CD4-positive, alpha-beta memory T cell (primary cell): ENCODE measurements at regions of chr3 and their contacts with region 1.

Region 1: DNA sequence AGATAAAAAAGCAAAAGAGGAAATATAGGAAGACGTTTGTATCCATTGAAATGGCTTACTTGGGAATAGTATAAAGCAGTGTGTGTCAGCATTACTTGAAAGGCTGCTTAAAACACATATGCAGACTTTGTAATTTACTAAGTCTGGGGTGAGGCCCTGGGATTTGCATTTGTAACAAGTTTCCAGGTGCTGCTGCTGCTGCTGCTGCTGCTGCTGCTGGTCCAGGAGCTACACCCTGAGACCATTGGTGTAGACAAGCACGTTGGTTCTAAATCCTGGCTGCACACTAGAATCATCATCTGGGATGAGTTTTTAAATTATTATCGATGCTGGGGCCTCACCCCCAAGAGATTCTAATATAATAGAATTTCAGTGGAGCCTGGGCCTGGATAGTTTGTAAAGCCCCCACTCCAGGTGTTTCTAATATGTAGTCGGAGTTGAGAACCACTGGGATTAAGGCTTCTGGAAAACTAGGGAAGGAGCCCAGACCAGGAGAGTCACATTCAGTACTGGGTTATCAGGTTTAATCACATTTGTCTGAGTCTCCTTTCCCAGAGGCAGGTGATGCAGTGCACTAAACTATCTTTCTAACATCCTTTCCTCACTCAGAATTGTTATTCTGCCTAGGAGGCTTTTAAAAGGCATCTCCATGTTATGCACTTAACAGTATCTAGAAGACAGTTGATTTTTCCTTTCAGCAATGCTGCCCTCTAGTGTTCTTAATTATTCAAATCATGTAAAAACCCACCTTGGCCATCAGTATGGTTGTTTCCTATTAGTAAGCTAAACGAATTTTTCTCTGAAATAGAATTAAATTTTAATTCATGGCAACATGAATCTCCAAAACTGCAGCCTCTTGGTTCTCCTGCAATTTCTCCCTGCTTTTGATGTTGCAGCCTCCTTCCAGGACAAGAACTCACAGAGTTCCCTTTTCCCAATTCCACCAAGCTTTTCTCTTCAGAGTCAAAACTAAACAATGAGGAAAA is 45.4 kb downstream of the SSR3 start:
- DNase-seq: peak in 4 of 5 donors; percentile 56 to 68 (median 62)
- H3K4me3 ChIP-seq: no peak overlapping the region
- H3K4me3 Mint-ChIP-seq: no peak overlapping the region
- H3K27ac ChIP-seq: no peak overlapping the region
- H3K27ac Mint-ChIP-seq: no peak overlapping the region
- H3K4me1 ChIP-seq: no peaks in the 10 kb centered on the region
- H3K4me1 Mint-ChIP-seq: peaks cover 0 to 17% (median 8%) of the 10 kb centered on the region in 4 donors
- H3K27me3 ChIP-seq: no peaks in the 10 kb centered on the region
- H3K27me3 Mint-ChIP-seq: peaks cover 2 to 3% of the 10 kb centered on the region in 2 donors

Region 2: DNA sequence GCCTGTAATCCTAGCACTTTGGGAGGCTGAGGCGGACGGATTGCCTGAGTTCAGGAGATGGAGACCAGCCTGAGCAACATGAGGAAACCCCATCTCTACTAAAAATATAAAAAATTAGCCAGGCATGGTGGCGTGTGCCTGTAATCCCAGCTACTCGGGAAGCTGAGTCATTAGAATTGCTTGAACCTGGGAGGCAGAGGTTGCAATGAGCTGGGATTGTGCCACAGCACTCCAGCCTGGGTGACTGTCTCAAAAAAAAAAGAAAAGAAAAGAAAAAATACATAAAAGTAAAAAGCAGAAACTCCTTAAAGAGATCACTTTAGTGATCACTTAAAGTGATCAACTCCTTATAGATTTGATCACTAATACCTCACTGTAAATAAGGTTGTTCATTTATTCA is 561.0 kb before region 1 on chr3:
- CTCF ChIA-PET with region 1: no interaction called
- POLR2A ChIA-PET with region 1: no interaction called
- intact Hi-C with region 1: no loop called
- DNase-seq: no peak
- H3K4me3 ChIP-seq: no peak overlapping the region
- H3K4me3 Mint-ChIP-seq: no peak overlapping the region
- H3K27ac ChIP-seq: no peak overlapping the region
- H3K27ac Mint-ChIP-seq: no peak overlapping the region
- H3K4me1 ChIP-seq: no peaks in the 10 kb centered on the region
- H3K4me1 Mint-ChIP-seq: peaks cover 0 to 3% (median 0%) of the 10 kb centered on the region in 4 donors
- H3K27me3 ChIP-seq: no peaks in the 10 kb centered on the region
- H3K27me3 Mint-ChIP-seq: no peaks in the 10 kb centered on the region

Region 3: GRCh38 chr3:156382458-156383346 is 126.8 kb before region 1 on chr3:
- CTCF ChIA-PET with region 1: interaction called, 9 read pairs
- POLR2A ChIA-PET with region 1: no interaction called
- intact Hi-C with region 1: loop called (anchors 5 kb)
- DNase-seq: no peak
- H3K4me3 ChIP-seq: no peak overlapping the region
- H3K4me3 Mint-ChIP-seq: no peak overlapping the region
- H3K27ac ChIP-seq: no peak overlapping the region
- H3K27ac Mint-ChIP-seq: no peak overlapping the region
- H3K4me1 ChIP-seq: no peaks in the 10 kb centered on the region
- H3K4me1 Mint-ChIP-seq: no peaks in the 10 kb centered on the region
- H3K27me3 ChIP-seq: no peaks in the 10 kb centered on the region
- H3K27me3 Mint-ChIP-seq: peaks cover 6 to 7% of the 10 kb centered on the region in 2 donors

Region 4: DNA sequence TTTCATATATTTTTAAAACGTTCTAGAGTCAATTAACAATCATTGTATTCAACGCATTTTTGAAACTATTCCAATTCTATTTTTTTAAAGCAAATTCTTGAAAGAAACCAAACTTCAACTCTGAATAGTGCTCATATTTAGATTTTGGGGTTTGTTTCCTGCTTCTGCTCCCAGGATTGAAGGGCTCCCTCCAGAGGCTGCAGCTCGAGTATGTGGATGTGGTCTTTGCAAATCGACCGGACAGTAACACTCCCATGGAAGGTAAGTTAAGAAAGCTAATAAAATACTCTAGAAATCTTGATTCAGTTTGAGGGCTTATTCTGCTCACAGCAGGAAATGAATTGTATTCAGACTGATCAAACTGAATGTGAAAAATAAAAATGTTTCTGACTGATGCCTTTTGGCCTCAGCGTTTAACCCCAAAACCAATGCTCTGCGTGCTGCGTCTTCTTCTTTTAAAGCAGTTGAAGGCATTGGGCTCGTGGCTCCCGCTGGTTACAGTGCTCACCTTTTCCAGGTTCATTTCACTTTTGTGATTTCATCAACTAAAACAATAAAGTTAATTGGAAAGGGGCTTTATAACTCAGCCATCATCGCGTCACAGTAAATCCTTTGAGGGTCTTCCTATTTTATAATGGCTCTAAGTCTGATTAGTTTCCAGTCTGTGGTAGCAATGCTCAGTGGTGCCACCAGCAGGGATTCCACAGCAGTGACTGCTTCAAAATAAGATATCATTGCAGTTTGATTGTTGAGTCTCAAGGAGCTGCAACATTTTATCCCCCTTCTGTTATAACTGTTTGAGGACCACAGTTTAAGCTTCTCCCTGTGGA is 34.7 kb before region 1 on chr3:
- CTCF ChIA-PET with region 1: interaction called, 155 read pairs
- POLR2A ChIA-PET with region 1: interaction called, 3 read pairs
- intact Hi-C with region 1: loop called (anchors 1 kb)
- DNase-seq: no peak
- H3K4me3 ChIP-seq: no peak overlapping the region
- H3K4me3 Mint-ChIP-seq: peak overlapping the region in 2 of 8 donors; percentile 31 to 36
- H3K27ac ChIP-seq: no peak overlapping the region
- H3K27ac Mint-ChIP-seq: no peak overlapping the region
- H3K4me1 ChIP-seq: no peaks in the 10 kb centered on the region
- H3K4me1 Mint-ChIP-seq: peaks cover 0 to 1% (median 0%) of the 10 kb centered on the region in 4 donors
- H3K27me3 ChIP-seq: no peaks in the 10 kb centered on the region
- H3K27me3 Mint-ChIP-seq: peaks cover 4 to 8% of the 10 kb centered on the region in 2 donors

Region 5: DNA sequence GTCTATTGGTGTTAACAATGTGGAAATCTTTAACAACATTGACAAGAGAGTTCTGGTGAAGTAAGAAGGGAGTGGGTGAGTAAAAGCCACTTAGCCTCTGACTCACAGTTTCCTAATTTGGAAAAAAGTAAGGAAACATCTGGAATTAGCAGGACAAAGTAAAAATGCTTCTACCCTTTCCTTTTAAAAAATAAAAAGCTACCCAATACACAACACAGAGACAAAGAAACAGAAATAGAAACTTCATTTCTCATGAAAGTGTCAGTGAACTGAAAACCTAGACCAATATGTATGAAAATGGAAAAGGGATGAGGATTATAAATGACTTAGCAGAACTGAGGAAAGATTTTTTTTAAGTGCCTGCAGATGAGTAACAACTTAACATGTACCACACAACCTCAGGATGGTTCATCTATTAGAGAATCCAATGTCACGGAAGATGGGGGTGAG is 20.0 kb before region 1 on chr3:
- CTCF ChIA-PET with region 1: interaction called, 125 read pairs
- POLR2A ChIA-PET with region 1: interaction called, 57 read pairs
- intact Hi-C with region 1: loop called (anchors 1 kb)
- DNase-seq: no peak
- H3K4me3 ChIP-seq: no peak overlapping the region
- H3K4me3 Mint-ChIP-seq: no peak overlapping the region
- H3K27ac ChIP-seq: no peak overlapping the region
- H3K27ac Mint-ChIP-seq: no peak overlapping the region
- H3K4me1 ChIP-seq: peaks cover 13% of the 10 kb centered on the region
- H3K4me1 Mint-ChIP-seq: peaks cover 8 to 20% (median 12%) of the 10 kb centered on the region in 4 donors
- H3K27me3 ChIP-seq: no peaks in the 10 kb centered on the region
- H3K27me3 Mint-ChIP-seq: peaks cover 2 to 5% of the 10 kb centered on the region in 2 donors

Region 6: GRCh38 chr3:156536524-156537231 is 27.2 kb after region 1 on chr3:
- CTCF ChIA-PET with region 1: interaction called, 54 read pairs
- POLR2A ChIA-PET with region 1: no interaction called
- intact Hi-C with region 1: loop called (anchors 1 kb)
- DNase-seq: no peak
- H3K4me3 ChIP-seq: no peak overlapping the region
- H3K4me3 Mint-ChIP-seq: no peak overlapping the region
- H3K27ac ChIP-seq: no peak overlapping the region
- H3K27ac Mint-ChIP-seq: no peak overlapping the region
- H3K4me1 ChIP-seq: no peaks in the 10 kb centered on the region
- H3K4me1 Mint-ChIP-seq: peaks cover 0 to 2% (median 0%) of the 10 kb centered on the region in 4 donors
- H3K27me3 ChIP-seq: no peaks in the 10 kb centered on the region
- H3K27me3 Mint-ChIP-seq: no peaks in the 10 kb centered on the region

Region 7: DNA sequence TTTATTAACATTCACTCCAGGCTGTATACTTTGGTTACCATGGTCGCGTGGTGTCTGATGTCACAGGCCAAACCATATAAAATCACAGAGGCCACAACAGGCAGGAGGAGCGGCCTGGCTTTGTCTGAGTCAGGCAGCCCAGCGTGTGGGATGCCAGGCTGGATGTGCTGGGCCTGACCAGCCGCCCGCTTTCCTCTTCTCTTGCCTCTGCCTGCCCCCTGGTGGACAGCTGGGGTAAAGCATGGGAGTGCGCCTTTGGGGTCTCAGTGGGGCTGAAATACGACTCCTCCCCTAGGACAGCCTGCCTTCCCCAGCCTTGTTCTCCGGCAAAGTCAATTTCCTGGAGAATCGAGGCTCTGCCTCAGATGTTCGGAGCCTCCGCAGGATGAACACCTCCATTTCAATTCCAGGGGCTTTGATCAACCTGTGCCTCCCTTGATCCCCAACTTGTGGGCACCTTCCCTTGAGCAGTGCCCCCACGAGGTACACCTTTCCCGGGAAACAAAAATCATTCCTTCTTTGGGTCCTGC is 572.3 kb after region 1 on chr3:
- CTCF ChIA-PET with region 1: interaction called, 6 read pairs
- POLR2A ChIA-PET with region 1: interaction called, 4 read pairs
- intact Hi-C with region 1: loop called (anchors 1 kb)
- DNase-seq: peak; percentile 82 to 92 (median 83)
- H3K4me3 ChIP-seq: no peak overlapping the region
- H3K4me3 Mint-ChIP-seq: peak overlapping the region in 5 of 8 donors; percentile 11 to 39 (median 21)
- H3K27ac ChIP-seq: peak overlapping the region; percentile 55
- H3K27ac Mint-ChIP-seq: peak overlapping the region; percentile 85 to 96 (median 89)
- H3K4me1 ChIP-seq: peaks cover 20% of the 10 kb centered on the region
- H3K4me1 Mint-ChIP-seq: peaks cover 10 to 29% (median 17%) of the 10 kb centered on the region in 4 donors
- H3K27me3 ChIP-seq: no peaks in the 10 kb centered on the region
- H3K27me3 Mint-ChIP-seq: no peaks in the 10 kb centered on the region